GM10248 (cell line): ENCODE measurements at regions of chr12 and their contacts with region 1.

Region 1: GRCh38 chr12:55996715-55997534 is at the start of gene SUOX:
- DNase-seq: peak; percentile 98
- CTCF ChIP-seq: no peak

Region 2: DNA sequence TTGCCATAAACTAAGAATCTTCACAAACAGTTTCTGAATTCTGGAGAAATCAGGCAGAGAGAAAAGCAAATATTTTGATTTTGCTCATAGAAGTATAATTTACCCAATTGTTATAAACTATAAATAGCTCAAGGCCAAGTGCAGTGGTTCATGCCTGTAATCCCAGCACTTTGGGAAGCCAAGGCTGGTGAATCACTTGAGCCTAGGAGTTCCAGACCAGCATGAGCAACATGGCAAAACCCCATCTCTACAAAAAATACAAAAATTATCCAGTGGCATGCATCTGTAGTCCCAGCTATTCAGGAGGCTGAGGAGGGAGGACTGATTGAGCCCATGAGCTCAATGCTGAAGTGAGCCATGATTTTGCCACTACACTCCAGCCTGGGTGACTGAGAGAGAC is 134.6 kb before region 1 on chr12:
- CTCF ChIA-PET with region 1: no interaction called
- POLR2A ChIA-PET with region 1: no interaction called
- DNase-seq: no peak
- CTCF ChIP-seq: no peak

Region 3: GRCh38 chr12:55926738-55927587 is 70.0 kb before region 1 on chr12:
- CTCF ChIA-PET with region 1: interaction called, 10 read pairs
- POLR2A ChIA-PET with region 1: no interaction called
- DNase-seq: peak; percentile 91
- CTCF ChIP-seq: peak; percentile 72

Region 4: DNA sequence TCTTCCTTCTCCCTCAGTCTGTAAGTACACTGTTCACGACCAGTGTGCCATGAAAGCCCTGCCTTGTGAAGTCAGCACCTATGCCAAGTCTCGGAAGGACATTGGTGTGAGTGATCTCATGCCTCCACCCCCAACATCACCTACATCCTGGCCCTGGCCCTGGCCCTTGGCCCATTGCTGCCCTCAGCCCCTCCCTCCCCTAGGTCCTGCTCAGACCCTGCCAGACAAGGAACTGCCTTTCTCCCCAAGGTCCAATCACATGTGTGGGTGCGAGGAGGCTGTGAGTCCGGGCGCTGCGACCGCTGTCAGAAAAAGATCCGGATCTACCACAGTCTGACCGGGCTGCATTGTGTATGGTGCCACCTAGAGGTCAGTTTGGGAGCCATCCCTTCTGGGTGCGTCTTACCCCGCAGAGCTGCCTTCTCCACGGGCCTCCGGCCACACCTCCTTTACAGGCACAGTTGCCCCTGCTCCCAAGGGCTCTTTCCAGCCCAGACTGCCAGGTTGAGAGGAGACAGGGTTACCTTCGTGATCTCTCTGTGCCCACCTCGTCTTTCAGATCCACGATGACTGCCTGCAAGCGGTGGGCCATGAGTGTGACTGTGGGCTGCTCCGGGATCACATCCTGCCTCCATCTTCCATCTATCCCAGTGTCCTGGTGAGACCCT is 56.7 kb before region 1 on chr12:
- CTCF ChIA-PET with region 1: interaction called, 28 read pairs
- POLR2A ChIA-PET with region 1: no interaction called
- DNase-seq: peak; percentile 86
- CTCF ChIP-seq: peak; percentile 89

Region 5: DNA sequence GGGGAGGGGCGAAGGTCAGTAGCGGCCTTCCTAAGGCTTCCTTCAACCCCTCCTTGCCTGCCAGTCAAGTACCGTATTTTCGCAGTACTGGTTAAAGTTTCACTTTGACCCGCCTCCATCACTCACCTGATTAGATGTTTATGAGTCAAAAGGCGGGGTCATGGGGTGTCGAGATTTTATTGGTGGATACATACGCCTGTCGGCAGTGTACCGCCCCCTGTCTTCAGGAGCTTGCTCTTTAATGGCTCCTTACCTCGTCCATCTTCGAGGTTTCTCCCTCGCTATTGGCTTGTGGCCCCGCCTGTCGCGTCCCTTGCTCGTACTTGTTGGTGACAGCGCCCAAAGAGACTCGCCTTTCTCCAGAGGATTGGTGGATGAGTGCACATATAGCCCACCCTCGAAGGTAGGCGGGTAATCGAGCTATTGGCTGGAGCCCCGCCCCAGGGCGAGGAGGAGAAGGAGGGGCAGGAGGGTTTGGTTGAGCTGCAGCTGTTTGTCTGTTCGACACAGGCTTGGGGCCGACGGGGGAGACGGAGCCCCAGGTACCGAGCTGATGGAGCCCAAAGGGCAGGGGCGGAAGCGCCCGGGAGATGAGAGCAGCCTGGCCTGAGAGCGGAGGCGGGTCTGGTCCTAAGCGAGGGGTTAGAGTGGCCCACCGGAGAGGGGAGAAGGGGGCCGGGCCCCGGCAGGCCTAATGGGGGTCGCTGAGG is 23.2 kb before region 1 on chr12 and contains the start of gene RAB5B:
- CTCF ChIA-PET with region 1: interaction called, 38 read pairs
- POLR2A ChIA-PET with region 1: interaction called, 11 read pairs
- DNase-seq: peak; percentile 94
- CTCF ChIP-seq: no peak

Region 6: GRCh38 chr12:56007564-56008559 is 10.9 kb after region 1 on chr12:
- CTCF ChIA-PET with region 1: interaction called, 114 read pairs
- POLR2A ChIA-PET with region 1: interaction called, 5 read pairs
- DNase-seq: peak; percentile 84
- CTCF ChIP-seq: no peak

Region 7: GRCh38 chr12:56029666-56030293 is 32.9 kb after region 1 on chr12:
- CTCF ChIA-PET with region 1: interaction called, 36 read pairs
- POLR2A ChIA-PET with region 1: no interaction called
- DNase-seq: peak; percentile 64
- CTCF ChIP-seq: peak; percentile 68

Region 8: GRCh38 chr12:56134897-56135296 is 138.0 kb after region 1 on chr12:
- CTCF ChIA-PET with region 1: no interaction called
- POLR2A ChIA-PET with region 1: no interaction called
- DNase-seq: no peak
- CTCF ChIP-seq: no peak